Activated CD4-positive, alpha-beta T cell treated with anti-CD3 and anti-CD28 coated beads for 36 hours (primary cell): ENCODE measurements at regions of chr19 and their contacts with region 1.

Region 1: GRCh38 chr19:38929929-38930775 is at the start of gene SARS2:
- DNase-seq: peak; percentile 95
- ATAC-seq: peak; percentile 69
- H3K4me3 Mint-ChIP-seq: peak within 1 kb of the TSS; percentile 81
- H3K27ac Mint-ChIP-seq: peak within 1 kb of the TSS; percentile 92
- H3K4me1 Mint-ChIP-seq: peaks cover 28% of the 10 kb centered on the region
- H3K27me3 Mint-ChIP-seq: no peaks in the 10 kb centered on the region
- total RNA-seq, gene SARS2: 36.7 to 39.4 TPM

Region 2: GRCh38 chr19:38335949-38336637 is 594.1 kb before region 1 on chr19:
- CTCF ChIA-PET with region 1: interaction called, 3 read pairs
- POLR2A ChIA-PET with region 1: no interaction called
- intact Hi-C with region 1: loop called (anchors 1 to 2 kb)
- DNase-seq: peak; percentile 98
- ATAC-seq: peak; percentile 75
- H3K4me3 Mint-ChIP-seq: peak overlapping the region; percentile 82
- H3K27ac Mint-ChIP-seq: peak overlapping the region; percentile 98
- H3K4me1 Mint-ChIP-seq: peaks cover 12% of the 10 kb centered on the region
- H3K27me3 Mint-ChIP-seq: no peaks in the 10 kb centered on the region

Region 3: DNA sequence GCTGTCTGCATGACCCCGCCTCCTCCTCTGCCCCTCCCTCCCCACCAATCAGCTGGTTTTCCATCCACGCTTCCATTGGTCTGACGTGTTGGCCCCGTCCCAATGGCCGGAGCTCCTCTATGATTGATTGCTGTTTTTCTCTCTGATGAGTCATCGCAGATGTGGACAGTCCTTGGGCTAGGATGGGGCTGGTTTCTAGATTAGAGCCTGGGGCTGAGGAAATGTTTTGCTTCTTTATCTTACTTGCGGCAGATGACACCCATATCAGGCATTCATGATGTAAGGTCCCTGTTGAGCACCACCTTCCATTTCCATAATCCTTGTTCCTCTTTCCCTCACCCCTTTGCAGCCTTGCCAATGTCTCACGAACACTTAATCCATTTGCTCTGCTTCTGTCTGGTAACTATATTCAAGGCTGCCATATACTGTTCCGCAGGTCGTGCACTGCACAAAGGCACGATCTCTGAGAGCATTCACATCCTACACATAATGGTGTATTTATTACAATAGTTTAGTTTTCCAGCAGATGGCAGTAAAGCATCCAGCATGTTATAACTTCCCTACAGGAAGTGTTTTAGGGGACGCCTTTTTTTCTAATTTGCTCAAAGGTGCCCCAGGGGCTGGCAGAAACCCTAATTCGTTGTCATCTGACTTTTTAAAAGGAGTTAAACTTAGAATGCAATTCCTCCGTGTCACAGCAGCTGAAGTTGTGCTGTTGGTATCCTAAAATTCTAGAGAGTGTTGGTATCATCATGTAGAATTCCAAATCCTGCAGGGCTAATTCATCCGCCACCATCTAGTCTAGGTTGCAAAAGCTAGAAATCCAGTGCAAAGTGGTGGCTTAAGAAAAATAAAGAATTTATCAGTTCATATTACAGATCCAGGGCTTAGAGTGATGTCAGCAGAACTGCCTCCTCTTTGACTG is 385.9 kb before region 1 on chr19:
- CTCF ChIA-PET with region 1: no interaction called
- POLR2A ChIA-PET with region 1: no interaction called
- intact Hi-C with region 1: loop called in 1 of 2 experiments (anchors 1 kb)
- DNase-seq: peak; percentile 72
- ATAC-seq: peak; percentile 89
- H3K4me3 Mint-ChIP-seq: peak overlapping the region; percentile 63
- H3K27ac Mint-ChIP-seq: peak overlapping the region; percentile 61
- H3K4me1 Mint-ChIP-seq: peaks cover 24% of the 10 kb centered on the region
- H3K27me3 Mint-ChIP-seq: no peaks in the 10 kb centered on the region

Region 4: GRCh38 chr19:38736413-38737280 is 193.5 kb before region 1 on chr19:
- CTCF ChIA-PET with region 1: interaction called, 10 read pairs
- POLR2A ChIA-PET with region 1: no interaction called
- intact Hi-C with region 1: loop called in 1 of 2 experiments (anchors 1 kb)
- DNase-seq: peak; percentile 89
- ATAC-seq: peak; percentile 40
- H3K4me3 Mint-ChIP-seq: peak overlapping the region; percentile 60
- H3K27ac Mint-ChIP-seq: no peak overlapping the region
- H3K4me1 Mint-ChIP-seq: peaks cover 33% of the 10 kb centered on the region
- H3K27me3 Mint-ChIP-seq: peaks cover 7% of the 10 kb centered on the region

Region 5: DNA sequence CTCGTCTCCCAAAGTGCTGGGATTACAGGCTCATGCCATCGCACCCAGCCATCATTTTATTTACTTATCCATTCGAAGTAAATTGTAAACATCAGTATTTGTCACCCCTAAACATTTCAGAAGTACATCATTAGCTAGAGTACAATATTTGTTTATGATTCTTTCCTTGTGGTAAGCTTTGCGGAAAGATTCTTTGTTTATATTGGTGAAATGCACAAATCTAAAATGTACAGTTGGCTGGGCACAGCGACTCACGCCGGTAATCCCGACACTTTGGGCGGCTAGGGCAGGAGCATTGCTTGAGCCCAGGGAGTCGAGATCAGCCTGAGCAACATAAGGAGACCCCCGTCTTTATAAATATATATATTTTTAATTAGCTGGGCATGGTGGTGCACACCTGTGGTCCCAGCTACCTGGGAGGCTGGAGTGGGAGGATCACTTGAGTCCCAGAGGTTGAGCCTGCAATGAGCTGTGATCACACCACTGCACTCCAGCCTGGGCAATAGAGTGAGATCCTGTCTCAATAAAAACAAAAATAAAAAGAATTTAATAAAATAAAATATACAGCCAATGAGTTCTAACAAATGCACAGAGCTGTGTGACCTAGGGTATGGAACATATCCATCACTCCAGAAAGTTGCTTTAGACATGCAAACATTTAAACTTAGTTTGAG is 130.9 kb before region 1 on chr19:
- CTCF ChIA-PET with region 1: no interaction called
- POLR2A ChIA-PET with region 1: no interaction called
- intact Hi-C with region 1: no loop called
- DNase-seq: no peak
- ATAC-seq: no peak
- H3K4me3 Mint-ChIP-seq: no peak overlapping the region
- H3K27ac Mint-ChIP-seq: no peak overlapping the region
- H3K4me1 Mint-ChIP-seq: peaks cover 3% of the 10 kb centered on the region
- H3K27me3 Mint-ChIP-seq: no peaks in the 10 kb centered on the region

Region 6: DNA sequence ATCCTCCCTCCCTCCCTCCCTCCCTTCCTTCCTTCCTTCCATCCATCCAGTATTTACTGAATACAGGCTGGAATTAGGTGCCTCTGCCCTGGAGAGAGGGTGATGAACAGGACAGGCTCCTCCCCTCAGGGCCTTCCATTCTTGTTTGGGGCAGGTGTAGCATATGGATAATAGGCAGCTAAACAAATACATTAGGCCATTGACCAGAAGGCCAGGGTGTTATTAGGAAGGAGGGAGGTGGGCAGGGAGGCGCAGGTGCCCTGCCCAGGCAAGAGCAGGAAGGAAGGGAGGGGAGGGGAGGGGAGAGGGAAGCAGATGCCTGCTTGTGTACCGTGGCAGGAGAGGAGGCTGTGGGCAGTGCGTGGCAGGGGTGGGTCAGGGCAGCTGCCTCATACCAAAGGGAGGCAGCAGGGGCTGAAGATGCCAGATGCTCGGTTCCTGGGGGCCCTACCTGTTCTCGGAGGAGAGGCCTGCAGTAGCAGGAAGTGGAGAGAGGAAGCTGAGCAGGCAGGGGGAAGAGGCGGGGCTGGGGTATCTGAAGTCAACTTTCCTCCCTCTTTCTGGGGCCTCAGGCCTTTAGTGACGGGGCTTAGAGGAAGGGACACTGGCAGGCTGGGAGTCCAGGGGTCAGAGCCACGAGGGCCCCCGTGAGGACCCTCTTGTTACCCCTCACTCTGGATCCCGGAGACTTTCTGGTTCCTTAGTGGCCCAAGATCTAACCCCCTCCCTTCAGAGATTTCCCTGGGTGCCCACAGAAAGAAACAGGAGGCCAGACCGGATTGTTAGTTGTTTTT is 52.2 kb before region 1 on chr19 and contains the start of gene RINL:
- CTCF ChIA-PET with region 1: interaction called, 5 read pairs
- POLR2A ChIA-PET with region 1: no interaction called
- intact Hi-C with region 1: loop called in 1 of 2 experiments (anchors 1 kb)
- DNase-seq: peak; percentile 84
- ATAC-seq: peak; percentile 93
- H3K4me3 Mint-ChIP-seq: peak within 1 kb of the TSS; percentile 89
- H3K27ac Mint-ChIP-seq: peak within 1 kb of the TSS; percentile 99
- H3K4me1 Mint-ChIP-seq: peaks cover 27% of the 10 kb centered on the region
- H3K27me3 Mint-ChIP-seq: no peaks in the 10 kb centered on the region
- total RNA-seq, gene RINL: 85.8 to 90.3 TPM

Region 7: DNA sequence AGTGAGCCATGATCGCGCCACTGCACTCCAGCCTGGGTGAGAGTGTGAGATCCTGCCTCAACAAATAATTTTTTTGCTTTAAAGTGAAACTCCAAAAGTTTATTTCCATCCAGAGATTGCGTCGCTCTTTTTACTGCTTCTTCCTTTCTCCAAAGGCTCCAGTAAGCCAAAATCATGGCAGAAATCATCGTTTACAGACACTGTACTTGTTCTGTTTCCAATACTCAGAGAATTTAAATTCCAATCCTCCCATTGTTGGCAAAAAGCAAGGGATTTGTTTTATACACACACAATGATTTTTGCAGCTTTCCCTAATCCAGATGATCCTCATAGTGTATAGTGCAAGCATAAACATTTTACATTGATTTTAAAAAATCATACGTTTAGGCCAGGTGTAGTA is 86.9 kb after region 1 on chr19:
- CTCF ChIA-PET with region 1: no interaction called
- POLR2A ChIA-PET with region 1: no interaction called
- intact Hi-C with region 1: no loop called
- DNase-seq: no peak
- ATAC-seq: no peak
- H3K4me3 Mint-ChIP-seq: no peak overlapping the region
- H3K27ac Mint-ChIP-seq: no peak overlapping the region
- H3K4me1 Mint-ChIP-seq: no peaks in the 10 kb centered on the region
- H3K27me3 Mint-ChIP-seq: peaks cover 24% of the 10 kb centered on the region

Region 8: GRCh38 chr19:39031368-39032062 is 101.4 kb after region 1 on chr19:
- CTCF ChIA-PET with region 1: no interaction called
- POLR2A ChIA-PET with region 1: no interaction called
- intact Hi-C with region 1: loop called in 1 of 2 experiments (anchors 1 kb)
- DNase-seq: peak; percentile 91
- ATAC-seq: peak; percentile 97
- H3K4me3 Mint-ChIP-seq: peak overlapping the region; percentile 58
- H3K27ac Mint-ChIP-seq: no peak overlapping the region
- H3K4me1 Mint-ChIP-seq: peaks cover 5% of the 10 kb centered on the region
- H3K27me3 Mint-ChIP-seq: peaks cover 24% of the 10 kb centered on the region

Region 9: GRCh38 chr19:39104186-39104596 is 174.0 kb after region 1 on chr19:
- CTCF ChIA-PET with region 1: no interaction called
- POLR2A ChIA-PET with region 1: no interaction called
- intact Hi-C with region 1: no loop called
- DNase-seq: no peak
- ATAC-seq: no peak
- H3K4me3 Mint-ChIP-seq: no peak overlapping the region
- H3K27ac Mint-ChIP-seq: no peak overlapping the region
- H3K4me1 Mint-ChIP-seq: no peaks in the 10 kb centered on the region
- H3K27me3 Mint-ChIP-seq: peaks cover 5% of the 10 kb centered on the region

Region 10: DNA sequence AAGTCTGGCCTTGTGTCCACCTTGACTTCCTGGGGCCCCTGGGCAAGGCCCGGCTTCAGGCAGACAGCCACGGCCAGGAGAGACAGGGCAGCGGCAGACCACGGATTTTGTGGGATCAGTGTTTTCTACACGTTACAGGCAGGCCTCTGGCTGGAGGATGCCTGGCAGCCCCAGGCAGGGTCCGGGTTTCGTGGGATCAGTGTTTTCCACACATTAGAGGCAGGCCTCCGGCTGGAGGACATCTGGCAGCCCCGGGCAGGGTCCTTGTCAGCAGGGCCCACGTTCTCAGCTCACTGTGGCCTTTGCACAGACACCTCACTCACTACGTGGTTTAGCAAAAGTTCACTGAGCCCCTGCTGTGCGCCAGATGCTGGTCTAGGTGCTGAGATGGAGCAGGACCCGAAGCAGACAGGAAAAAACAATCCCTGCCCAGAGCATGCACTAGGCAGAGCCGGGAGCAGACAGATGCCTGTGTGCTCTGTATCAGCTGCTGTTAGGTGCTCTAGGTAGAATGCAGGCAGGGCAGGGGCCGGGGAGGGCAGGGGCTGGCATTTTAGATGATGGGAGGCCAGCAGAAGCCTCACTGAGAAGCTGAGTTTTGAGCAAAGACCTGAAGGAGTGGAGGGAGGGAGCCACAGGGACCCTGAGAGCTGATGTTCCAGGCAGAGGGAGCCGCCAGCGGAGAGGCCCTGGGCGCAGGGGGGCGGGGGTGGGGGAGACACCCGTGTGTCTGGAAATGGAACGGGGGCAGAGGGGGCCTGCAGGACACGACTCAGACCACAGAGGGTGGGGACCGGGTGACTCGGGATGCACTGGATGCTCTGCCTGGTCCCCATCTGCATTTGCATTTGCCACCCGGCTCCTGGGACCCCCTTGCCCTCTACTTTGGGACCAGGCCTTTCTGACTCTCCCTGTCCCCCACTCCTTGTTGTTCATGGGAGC is 241.6 kb after region 1 on chr19:
- CTCF ChIA-PET with region 1: no interaction called
- POLR2A ChIA-PET with region 1: no interaction called
- intact Hi-C with region 1: no loop called
- DNase-seq: no peak
- ATAC-seq: no peak
- H3K4me3 Mint-ChIP-seq: no peak overlapping the region
- H3K27ac Mint-ChIP-seq: no peak overlapping the region
- H3K4me1 Mint-ChIP-seq: no peaks in the 10 kb centered on the region
- H3K27me3 Mint-ChIP-seq: no peaks in the 10 kb centered on the region